ENCODE measurements at regions of chr15 and their contacts with region 1.

Region 1: DNA sequence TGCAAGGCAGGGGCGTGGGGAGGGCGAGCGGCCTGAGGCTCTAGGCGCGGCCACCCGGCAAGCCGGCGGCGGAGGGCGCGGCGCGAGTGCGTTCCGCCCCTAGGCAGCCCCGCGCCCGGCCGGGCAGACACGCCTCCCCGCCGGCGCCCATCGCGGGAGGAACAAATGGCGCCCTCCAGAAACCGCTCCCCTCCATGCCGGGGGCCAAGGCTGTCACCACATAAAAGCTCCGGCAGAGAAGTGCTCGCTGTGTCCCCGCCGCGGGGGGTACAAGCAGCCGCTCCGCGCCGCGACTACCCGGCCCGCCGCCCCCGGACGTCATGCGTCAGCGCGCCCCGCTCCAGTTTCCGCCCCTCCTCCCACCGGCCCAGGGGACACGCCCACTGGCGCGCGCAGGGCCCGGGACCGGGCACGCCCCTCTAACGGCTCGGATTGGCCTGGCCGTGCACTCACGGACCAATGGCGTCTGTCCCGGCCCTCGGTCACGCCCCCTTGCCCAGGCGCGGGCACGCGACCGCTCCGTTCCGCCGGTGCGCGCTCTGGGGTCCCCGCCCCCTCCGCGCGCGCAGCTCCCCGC is 391 bp upstream of the KLF13 start:
- DNase-seq: peak; percentile 92
- H3K4me3 ChIP-seq: peak overlapping the region; percentile 73
- H3K27ac ChIP-seq: peak overlapping the region; percentile 90
- H3K27me3 ChIP-seq: no peaks in the 10 kb centered on the region
- CTCF ChIP-seq: no peak

Region 2: DNA sequence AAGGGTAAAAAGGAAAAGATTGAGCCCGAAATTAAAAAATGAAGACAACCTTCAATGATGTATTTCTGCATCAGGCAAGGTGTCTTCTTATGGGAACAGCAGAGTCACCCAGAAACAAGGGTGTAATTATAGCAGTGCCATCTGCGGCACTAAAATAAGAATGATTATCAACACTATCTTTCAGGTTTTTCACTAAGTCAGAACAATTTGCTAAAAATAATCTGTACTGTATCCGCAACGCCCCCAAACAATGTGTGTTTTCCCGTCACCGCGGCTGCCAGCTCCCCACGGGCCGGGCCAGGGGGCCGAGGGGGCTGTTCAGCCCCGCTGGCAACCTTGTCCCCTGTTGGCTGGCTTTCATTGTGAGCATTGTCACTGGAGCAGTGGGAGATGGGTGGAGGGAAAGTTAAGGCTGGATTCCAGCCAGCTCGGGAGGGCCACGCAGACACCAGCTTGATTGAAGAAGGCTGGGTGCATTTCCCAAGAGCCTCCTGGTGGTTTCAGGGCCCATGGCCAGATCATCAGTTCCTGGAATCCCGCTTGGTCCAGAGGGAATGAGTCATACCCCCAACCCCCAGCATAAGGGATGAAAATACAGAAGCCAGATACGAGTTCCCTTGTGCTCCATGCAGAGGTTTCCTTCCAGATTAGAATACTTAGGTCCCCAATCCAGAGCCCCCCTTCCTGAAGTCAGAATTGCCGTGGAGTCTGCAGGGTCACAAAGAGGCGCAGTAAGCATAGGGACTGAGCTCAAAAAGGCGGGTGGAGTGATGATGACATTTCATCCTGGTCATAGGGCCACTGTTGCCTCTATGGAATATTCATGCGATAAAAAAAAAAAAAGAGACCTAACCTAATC is 89.8 kb before region 1 on chr15:
- CTCF ChIA-PET with region 1: no interaction called
- POLR2A ChIA-PET with region 1: interaction called, 10 read pairs
- DNase-seq: peak; percentile 90
- H3K4me3 ChIP-seq: 0 out of 2 replicates have a peak overlapping the region, but pooled peaks have one; percentile 15
- H3K27ac ChIP-seq: peak overlapping the region; percentile 90
- H3K27me3 ChIP-seq: no peaks in the 10 kb centered on the region
- CTCF ChIP-seq: 0 out of 2 replicates have a peak, but pooled peaks have one; percentile 14

Region 3: DNA sequence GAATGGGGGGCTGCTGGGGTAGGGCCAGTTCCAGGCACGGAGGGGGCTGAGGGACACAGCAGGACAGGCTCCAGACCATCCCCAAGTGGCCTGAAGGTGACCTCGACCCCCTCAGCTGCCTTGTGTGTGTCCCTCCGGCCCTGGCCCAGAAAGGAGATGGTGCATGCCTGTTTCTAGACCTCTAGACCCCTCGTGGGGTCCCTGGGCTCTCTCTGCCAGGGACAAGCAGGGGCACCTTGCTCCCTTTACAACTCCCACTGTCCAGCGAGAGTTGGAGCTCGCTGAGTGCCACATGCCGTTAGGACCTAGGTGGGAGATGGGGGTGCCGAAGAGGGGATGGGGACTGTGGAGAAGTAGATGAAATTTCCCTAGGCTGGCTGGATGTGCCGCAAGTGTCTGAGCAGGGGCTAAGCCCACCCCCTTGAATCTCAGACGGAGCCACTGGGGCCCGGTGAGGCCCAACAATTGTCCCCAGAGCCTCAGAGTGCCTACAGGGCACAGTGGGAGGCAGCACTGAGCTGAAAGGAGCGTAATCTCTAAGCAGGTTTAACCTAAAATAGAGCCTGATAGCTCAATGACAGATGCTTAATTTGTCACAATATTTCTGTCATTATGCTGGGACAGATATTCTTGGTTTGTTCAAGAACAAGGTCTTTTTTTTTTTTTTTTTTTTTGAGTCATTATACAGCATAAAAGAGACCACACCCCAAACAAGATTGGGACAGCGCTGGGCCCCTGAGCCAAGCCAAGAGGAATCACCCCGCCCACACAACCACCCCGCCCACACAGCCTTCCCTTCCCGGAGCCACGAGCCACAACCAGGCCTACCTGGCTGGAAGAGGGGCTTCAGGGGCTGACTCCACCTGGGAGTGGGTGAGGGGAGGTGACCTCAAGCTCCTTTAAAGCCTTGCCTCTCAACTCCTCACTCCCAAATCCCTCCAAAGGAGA is 23.2 kb before region 1 on chr15:
- CTCF ChIA-PET with region 1: no interaction called
- POLR2A ChIA-PET with region 1: no interaction called
- DNase-seq: no peak
- H3K4me3 ChIP-seq: no peak overlapping the region
- H3K27ac ChIP-seq: no peak overlapping the region
- H3K27me3 ChIP-seq: peaks cover 20% of the 10 kb centered on the region
- CTCF ChIP-seq: no peak